ENCODE measurements at regions of chr11 and their contacts with region 1.

Region 1: DNA sequence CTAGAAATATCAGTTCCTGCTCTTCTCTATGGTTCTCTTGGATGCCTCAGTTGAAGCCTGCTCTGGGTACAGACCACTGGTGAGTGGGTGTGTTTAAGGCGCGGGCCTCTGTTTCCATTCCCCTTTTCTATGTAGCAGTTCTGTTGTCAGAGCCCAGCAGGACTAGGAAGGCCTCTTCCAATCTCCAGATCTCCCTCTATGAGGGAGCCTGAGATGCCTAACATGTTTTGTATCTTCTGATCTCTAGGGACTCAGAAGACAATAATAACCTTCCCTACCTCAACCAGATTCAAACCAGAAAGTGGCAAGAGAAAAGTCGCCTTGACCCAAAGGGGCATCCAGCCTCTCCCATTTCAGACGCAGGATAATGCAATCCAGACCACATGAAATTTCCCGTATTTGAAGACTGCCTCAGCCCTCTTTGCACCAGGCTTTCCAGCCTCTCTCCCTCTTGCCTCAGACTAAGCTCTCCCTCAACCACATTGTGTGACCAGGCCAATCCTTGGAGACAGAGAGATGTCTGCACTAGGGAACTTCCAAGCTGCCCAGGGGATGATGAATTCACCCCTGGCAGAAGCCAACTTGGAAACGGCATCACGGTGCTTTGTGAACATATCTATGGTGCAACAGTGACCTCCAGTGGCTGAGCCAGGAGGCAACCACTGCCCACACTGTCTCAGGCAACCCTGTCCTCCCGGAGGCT is 150.1 kb upstream of the UBASH3B start:
- DNase-seq: peak; percentile 64 to 87 (median 78)
- ATAC-seq: peak; percentile 95 to 100 (median 100)
- H3K4me3 ChIP-seq: no peak overlapping the region
- H3K27ac ChIP-seq: no peak overlapping the region
- H3K4me1 ChIP-seq: no peaks in the 10 kb centered on the region
- H3K27me3 ChIP-seq: no peaks in the 10 kb centered on the region
- CTCF ChIP-seq: peak; percentile 56 to 81 (median 74)

Region 2: DNA sequence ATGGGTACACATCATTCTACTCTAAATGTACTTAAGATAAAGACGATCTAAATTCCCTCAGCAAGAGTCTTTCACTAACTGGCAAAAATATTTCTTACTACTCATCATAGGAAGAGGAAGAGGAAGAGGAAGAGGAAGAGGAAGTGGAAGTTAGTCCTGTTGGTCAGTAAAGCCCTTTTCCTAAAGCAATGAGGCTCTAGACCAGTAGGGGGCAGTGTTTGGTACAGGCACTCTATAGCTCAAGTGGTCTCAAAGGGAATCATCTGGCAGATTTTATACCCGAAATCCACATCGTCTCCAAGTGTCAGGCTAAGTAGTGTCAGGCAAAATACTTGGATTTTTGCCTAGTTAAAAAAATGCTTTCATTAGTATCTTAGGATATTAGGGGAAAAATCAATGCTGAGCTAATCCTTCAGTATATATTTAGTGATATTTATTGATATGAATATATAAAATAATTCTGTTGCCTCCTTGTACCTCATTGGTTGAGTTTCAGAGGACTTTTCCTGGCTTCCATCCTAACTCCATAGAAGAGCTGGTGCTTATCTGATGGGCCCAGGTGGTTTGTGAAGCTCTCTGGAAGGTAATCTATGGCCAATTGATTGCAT is 397.2 kb before region 1 on chr11:
- intact Hi-C with region 1: loop called in 1 of 3 experiments (anchors 5 kb)
- DNase-seq: peak in 1 of 6 donors; percentile 22
- ATAC-seq: peak in 2 of 4 donors; percentile 42 to 57
- H3K4me3 ChIP-seq: no peak overlapping the region
- H3K27ac ChIP-seq: no peak overlapping the region
- H3K4me1 ChIP-seq: no peaks in the 10 kb centered on the region
- H3K27me3 ChIP-seq: no peaks in the 10 kb centered on the region
- CTCF ChIP-seq: peak in 3 of 4 donors; percentile 31 to 42 (median 41)

Region 3: DNA sequence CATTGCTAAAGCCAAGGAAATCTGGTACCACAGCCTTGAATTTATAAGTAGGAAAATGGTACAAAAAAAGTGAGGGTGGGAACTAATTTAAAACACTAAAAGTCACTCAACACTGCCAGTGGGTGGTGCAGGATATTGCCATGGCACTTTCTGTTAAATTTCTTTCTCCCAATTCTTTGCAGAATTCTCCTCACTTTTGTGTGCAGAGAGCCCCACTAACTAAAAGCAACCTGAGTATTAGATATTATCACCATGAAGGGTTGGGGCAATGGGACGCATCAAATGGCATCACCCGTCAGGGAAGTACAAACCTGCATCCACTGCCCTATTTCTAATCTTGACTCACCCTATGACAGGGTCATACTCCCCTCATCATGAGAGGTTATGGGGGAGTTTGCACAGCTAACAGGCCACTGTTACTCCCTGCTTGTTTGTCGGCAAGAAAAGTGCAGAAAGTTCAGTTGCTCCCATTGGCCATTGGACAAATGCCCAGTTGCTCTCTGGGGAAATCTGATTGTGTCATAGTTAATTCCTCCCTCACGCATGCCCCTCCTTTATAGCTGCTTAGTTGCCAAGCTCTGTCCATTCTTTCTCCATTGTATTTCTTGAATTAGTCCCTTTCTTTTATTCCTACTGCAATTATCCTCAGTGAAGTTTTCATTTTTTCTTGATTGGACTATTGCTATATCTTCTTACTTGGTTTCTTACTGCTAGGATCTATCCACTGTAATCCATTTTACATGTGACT is 295.7 kb before region 1 on chr11:
- intact Hi-C with region 1: loop called in 2 of 3 experiments (anchors 5 to 10 kb)
- DNase-seq: peak in 4 of 6 donors; percentile 19 to 41 (median 25)
- ATAC-seq: peak; percentile 50 to 73 (median 58)
- H3K4me3 ChIP-seq: no peak overlapping the region
- H3K27ac ChIP-seq: no peak overlapping the region
- H3K4me1 ChIP-seq: peaks cover 0 to 7% (median 0%) of the 10 kb centered on the region in 3 donors
- H3K27me3 ChIP-seq: no peaks in the 10 kb centered on the region
- CTCF ChIP-seq: no peak

Region 4: DNA sequence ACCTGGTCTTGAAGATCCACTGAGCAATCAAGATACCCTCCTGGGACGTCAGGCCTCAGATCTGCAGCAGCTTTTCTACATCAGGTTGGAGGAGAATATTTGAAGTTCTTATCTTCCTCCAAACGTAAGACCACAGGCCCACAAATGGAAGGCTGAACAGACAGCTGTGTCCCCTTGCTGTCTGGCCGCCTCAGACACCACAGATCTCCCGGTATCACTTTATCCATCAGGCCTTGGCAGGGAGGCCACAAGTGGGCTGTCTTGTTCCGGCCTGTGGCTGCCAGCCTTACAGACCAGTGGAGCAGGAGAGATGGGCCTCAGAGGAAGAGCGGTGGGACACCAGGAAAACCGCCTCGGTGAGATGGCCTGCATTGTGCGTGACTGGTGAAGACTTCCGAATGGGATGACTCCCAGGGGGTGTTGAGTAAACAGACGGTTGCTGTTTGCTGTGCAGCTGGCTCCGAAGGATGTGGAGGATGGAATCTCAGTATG is 166.0 kb after region 1 on chr11:
- intact Hi-C with region 1: no loop called
- DNase-seq: no peak
- ATAC-seq: no peak
- H3K4me3 ChIP-seq: no peak overlapping the region
- H3K27ac ChIP-seq: no peak overlapping the region
- H3K4me1 ChIP-seq: no peaks in the 10 kb centered on the region
- H3K27me3 ChIP-seq: no peaks in the 10 kb centered on the region
- CTCF ChIP-seq: no peak